AG04450 (cell line): ENCODE measurements at regions of chr10 and their contacts with region 1.

Region 1: GRCh38 chr10:92880233-92880861 is 32.0 kb downstream of the EXOC6 start:
- DNase-seq: peak; percentile 24
- H3K4me3 ChIP-seq: no peak overlapping the region
- H3K27ac ChIP-seq: no peak overlapping the region
- H3K27me3 ChIP-seq: no peaks in the 10 kb centered on the region
- CTCF ChIP-seq: peak; percentile 53

Region 2: GRCh38 chr10:92897916-92898315 is 17.6 kb after region 1 on chr10:
- CTCF ChIA-PET with region 1: interaction called, 13 read pairs
- POLR2A ChIA-PET with region 1: no interaction called
- DNase-seq: no peak
- H3K4me3 ChIP-seq: no peak overlapping the region
- H3K27ac ChIP-seq: no peak overlapping the region
- H3K27me3 ChIP-seq: no peaks in the 10 kb centered on the region
- CTCF ChIP-seq: no peak

Region 3: DNA sequence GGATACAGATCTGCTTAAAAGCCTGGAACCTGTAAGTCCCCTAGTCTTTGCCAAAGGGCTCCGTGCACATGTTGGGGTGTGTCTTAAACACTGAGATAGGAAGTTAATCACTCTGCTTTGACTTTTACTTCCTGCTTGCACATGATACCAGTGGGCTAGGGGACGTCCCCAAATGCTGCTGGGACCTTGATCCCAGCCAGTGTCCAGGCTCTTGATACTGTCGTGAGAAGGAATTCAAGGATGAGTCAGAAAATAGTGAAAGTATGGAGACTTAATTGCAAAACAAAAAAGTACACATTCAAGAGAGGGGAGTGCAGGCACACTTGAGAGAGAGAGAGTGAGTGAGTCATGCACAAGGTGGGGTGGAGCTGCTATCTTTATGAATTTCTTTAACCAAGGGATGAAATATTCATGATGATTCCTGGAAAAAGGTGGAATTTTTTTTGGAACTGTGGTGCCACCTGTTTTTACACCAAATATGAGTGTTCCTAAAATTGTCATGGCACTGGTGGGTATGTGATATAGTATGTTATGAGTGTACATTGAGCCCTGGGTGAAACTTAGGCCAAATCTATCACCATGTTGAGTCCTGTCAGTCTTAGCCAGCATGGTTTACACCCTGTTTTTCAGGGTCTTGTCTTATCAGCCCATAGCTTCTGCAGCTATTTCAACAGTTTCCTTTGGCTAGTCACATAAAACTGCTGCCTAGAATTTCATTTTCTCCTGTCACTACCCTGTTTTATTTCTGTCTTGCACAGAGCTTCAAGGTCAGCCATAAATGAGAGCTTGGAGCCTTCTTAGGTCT is 91.9 kb after region 1 on chr10:
- CTCF ChIA-PET with region 1: no interaction called
- POLR2A ChIA-PET with region 1: no interaction called
- DNase-seq: no peak
- H3K4me3 ChIP-seq: peak overlapping the region; percentile 20; the same call in 1 of the 2 replicates
- H3K27ac ChIP-seq: peak overlapping the region; percentile 73
- H3K27me3 ChIP-seq: no peaks in the 10 kb centered on the region
- CTCF ChIP-seq: no peak

Region 4: GRCh38 chr10:93518527-93518926 is 638.2 kb after region 1 on chr10:
- CTCF ChIA-PET with region 1: no interaction called
- POLR2A ChIA-PET with region 1: no interaction called
- DNase-seq: no peak
- H3K4me3 ChIP-seq: no peak overlapping the region
- H3K27ac ChIP-seq: no peak overlapping the region
- H3K27me3 ChIP-seq: no peaks in the 10 kb centered on the region
- CTCF ChIP-seq: no peak